Heart left ventricle (tissue), 16 donors: ENCODE measurements at regions of chr5 and their contacts with region 1.

Region 1: GRCh38 chr5:73911761-73912393 is 285.9 kb downstream of the ARHGEF28 start:
- DNase-seq: no peak
- ATAC-seq: no peak
- H3K4me3 ChIP-seq: no peak overlapping the region
- H3K27ac ChIP-seq: no peak overlapping the region
- H3K4me1 ChIP-seq: peaks cover 0 to 6% (median 0%) of the 10 kb centered on the region in 12 donors
- H3K27me3 ChIP-seq: no peaks in the 10 kb centered on the region
- CTCF ChIP-seq: no peak
- POLR2A ChIP-seq: no peak

Region 2: DNA sequence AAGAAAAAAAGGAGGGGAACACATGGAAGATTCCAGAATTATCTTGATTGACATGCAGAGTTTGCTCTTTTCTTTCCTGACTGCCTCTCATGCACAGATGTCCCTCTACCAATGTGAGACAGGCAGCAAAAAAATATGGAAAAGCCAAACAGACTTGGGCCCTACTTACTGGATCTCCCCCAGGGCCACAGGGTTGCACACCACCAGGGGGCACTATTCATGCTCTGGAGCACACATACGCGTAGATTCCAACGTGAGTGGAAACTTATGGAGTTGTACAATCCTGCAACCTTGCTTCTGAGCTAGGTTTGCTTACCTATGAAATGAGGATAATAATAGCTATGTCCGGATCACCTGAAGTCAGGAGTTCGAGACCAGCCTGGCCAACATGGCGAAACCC is 33.6 kb after region 1 on chr5:
- intact Hi-C with region 1: no loop called
- DNase-seq: no peak
- ATAC-seq: no peak
- H3K4me3 ChIP-seq: no peak overlapping the region
- H3K27ac ChIP-seq: no peak overlapping the region
- H3K4me1 ChIP-seq: peaks cover 0 to 19% (median 2%) of the 10 kb centered on the region in 12 donors
- H3K27me3 ChIP-seq: peaks cover 0 to 2% (median 0%) of the 10 kb centered on the region in 9 donors
- CTCF ChIP-seq: peak in 3 of 12 donors; percentile 12 to 24 (median 17)
- POLR2A ChIP-seq: no peak

Region 3: DNA sequence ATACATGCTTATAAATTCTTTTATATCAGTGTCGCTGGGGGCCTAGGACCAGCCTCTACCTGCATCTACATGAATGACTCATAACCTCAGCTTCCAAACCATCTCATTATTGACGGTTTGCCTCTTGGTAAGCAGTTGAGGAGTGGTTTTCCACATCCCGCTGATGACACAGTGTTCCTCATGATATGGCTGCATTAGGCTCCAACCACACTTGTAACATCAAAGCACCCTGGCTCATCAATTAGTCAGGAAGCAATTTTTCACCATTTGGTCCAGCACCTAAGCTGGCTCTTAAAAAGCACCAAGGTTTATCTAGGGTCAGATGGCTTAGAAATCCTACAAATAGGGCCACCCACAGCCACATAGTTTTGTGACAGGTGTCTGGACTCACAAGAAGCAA is 116.5 kb after region 1 on chr5:
- intact Hi-C with region 1: loop called in 6 of 10 experiments (anchors 5 to 10 kb)
- DNase-seq: no peak
- ATAC-seq: no peak
- H3K4me3 ChIP-seq: no peak overlapping the region
- H3K27ac ChIP-seq: no peak overlapping the region
- H3K4me1 ChIP-seq: no peaks in the 10 kb centered on the region
- H3K27me3 ChIP-seq: no peaks in the 10 kb centered on the region
- CTCF ChIP-seq: no peak
- POLR2A ChIP-seq: no peak

Region 4: GRCh38 chr5:74085186-74085585 is 173.3 kb after region 1 on chr5:
- intact Hi-C with region 1: no loop called
- DNase-seq: no peak
- ATAC-seq: no peak
- H3K4me3 ChIP-seq: no peak overlapping the region
- H3K27ac ChIP-seq: no peak overlapping the region
- H3K4me1 ChIP-seq: no peaks in the 10 kb centered on the region
- H3K27me3 ChIP-seq: no peaks in the 10 kb centered on the region
- CTCF ChIP-seq: no peak
- POLR2A ChIP-seq: no peak